CD8-positive, alpha-beta T cell (primary cell): ENCODE measurements at regions of chr10 and their contacts with region 1.

Region 1: GRCh38 chr10:128011175-128011979 is 104.5 kb downstream of the PTPRE start:
- DNase-seq: peak; percentile 78 to 94 (median 88)
- ATAC-seq: peak; percentile 100
- H3K4me3 ChIP-seq: no peak overlapping the region
- H3K4me3 Mint-ChIP-seq: peak overlapping the region; percentile 15
- H3K27ac ChIP-seq: no peak overlapping the region
- H3K27ac Mint-ChIP-seq: no peak overlapping the region
- H3K4me1 ChIP-seq: peaks cover 6% of the 10 kb centered on the region
- H3K4me1 Mint-ChIP-seq: peaks cover 8% of the 10 kb centered on the region
- H3K27me3 ChIP-seq: no peaks in the 10 kb centered on the region
- H3K27me3 Mint-ChIP-seq: peaks cover 3% of the 10 kb centered on the region
- CTCF ChIP-seq: peak; percentile 88

Region 2: DNA sequence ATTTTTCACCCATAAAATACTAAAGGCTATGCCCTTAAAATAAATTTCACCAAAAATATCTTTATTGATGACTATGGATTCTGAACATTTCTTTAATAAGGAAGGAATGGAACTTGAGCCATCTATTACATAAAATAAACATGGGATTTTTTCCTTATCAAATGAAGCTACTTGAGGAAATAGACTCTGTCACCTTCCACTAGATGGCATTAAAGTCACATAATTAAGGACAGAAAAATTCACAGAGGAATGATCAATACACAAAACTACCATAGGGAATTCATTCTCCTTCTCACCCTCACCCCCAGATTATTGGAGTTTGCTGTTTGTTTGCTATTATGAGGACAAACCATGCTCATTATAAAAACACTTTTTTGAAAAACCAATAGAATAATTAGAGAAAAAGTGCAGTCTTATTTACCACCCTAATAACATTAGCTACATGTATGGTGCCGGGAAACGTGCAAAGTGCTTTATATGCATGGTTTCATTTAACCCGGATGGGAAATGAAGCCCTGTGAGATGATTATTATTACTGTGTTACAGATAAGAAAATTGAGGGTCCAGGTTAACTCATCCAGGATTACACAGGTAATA is 295.5 kb before region 1 on chr10:
- CTCF ChIA-PET with region 1: no interaction called
- POLR2A ChIA-PET with region 1: no interaction called
- intact Hi-C with region 1: loop called in 1 of 2 experiments (anchors 5 kb)
- DNase-seq: peak in 2 of 9 experiments; percentile 13 to 24
- ATAC-seq: no peak
- H3K4me3 ChIP-seq: no peak overlapping the region
- H3K4me3 Mint-ChIP-seq: no peak overlapping the region
- H3K27ac ChIP-seq: no peak overlapping the region
- H3K27ac Mint-ChIP-seq: no peak overlapping the region
- H3K4me1 ChIP-seq: no peaks in the 10 kb centered on the region
- H3K4me1 Mint-ChIP-seq: no peaks in the 10 kb centered on the region
- H3K27me3 ChIP-seq: no peaks in the 10 kb centered on the region
- H3K27me3 Mint-ChIP-seq: peaks cover 2% of the 10 kb centered on the region
- CTCF ChIP-seq: no peak

Region 3: DNA sequence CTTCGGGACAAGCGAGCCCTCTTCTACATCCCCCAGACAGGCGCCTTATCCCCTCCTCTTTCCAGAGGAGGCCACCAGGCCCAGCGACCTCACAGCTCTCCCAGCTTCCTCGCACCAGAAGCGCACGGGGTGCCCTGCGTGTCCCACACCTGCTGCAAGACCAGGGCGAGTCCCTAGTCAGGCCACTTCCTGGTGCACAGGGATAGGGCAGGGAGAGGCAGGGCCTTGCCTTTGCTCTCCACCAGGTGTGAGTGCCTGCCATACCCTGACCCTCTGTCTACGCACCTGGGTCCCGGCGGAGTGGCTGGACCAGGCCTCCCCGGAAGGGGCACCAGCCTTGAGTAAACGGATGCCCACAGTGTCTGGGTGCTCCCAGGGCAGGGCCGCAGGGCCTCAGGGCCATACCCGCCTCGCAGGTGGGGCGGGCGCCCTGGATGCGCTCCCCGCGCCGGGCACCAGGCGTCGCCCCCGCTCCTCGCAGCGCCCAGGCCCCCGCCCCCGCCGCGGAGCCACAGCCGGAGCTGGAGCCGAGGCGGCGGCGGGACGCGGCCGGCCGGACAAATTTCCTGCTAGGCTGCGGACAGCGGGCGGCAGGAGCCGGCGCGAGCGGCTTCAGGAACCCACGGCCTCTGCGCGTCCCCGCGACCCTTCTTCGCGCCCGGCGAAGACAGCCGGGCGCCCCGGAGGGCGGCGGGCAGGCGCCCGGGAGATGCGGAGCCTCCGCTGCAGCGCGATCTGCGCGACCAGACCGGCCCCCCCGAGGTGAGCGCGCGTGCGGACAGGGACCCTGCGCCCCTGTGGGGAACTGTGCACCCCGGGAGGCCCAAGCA is 104.6 kb before region 1 on chr10 and contains the start of gene PTPRE:
- CTCF ChIA-PET with region 1: interaction called, 38 read pairs
- POLR2A ChIA-PET with region 1: no interaction called
- intact Hi-C with region 1: loop called in 1 of 2 experiments (anchors 1 kb)
- DNase-seq: peak; percentile 17 to 79 (median 49)
- ATAC-seq: peak; percentile 96
- H3K4me3 ChIP-seq: peak within 1 kb of the TSS in 1 of 2 experiments; percentile 41
- H3K4me3 Mint-ChIP-seq: peak within 1 kb of the TSS; percentile 58
- H3K27ac ChIP-seq: no peak within 1 kb of the TSS
- H3K27ac Mint-ChIP-seq: no peak within 1 kb of the TSS
- H3K4me1 ChIP-seq: no peaks in the 10 kb centered on the region
- H3K4me1 Mint-ChIP-seq: no peaks in the 10 kb centered on the region
- H3K27me3 ChIP-seq: no peaks in the 10 kb centered on the region
- H3K27me3 Mint-ChIP-seq: peaks cover 32% of the 10 kb centered on the region
- CTCF ChIP-seq: peak; percentile 54
- total RNA-seq, gene PTPRE: 72.0 to 80.4 TPM

Region 4: DNA sequence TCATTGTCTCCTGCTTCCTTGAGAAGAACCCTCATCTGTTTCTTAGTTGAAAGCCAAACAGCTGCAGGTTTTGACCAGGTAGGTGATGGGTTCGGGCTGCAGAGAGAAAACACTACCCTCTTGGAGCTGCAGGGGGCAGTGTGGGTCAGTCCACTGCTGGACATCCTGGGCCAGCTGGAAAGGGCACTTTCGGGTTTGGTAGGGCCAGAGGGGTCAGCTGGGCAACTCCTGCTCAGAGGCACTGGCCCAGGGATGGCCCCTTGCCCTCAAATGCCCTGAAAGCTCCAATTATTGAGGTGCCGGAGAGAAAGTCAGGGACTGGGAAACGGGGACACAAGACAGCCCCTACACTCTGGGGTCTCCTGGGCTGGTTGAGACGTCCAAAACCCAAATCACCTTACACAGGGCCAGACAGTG is 24.2 kb after region 1 on chr10:
- CTCF ChIA-PET with region 1: interaction called, 21 read pairs
- POLR2A ChIA-PET with region 1: no interaction called
- intact Hi-C with region 1: no loop called
- DNase-seq: peak; percentile 40 to 78 (median 70)
- ATAC-seq: peak; percentile 78
- H3K4me3 ChIP-seq: no peak overlapping the region
- H3K4me3 Mint-ChIP-seq: no peak overlapping the region
- H3K27ac ChIP-seq: no peak overlapping the region
- H3K27ac Mint-ChIP-seq: no peak overlapping the region
- H3K4me1 ChIP-seq: no peaks in the 10 kb centered on the region
- H3K4me1 Mint-ChIP-seq: no peaks in the 10 kb centered on the region
- H3K27me3 ChIP-seq: no peaks in the 10 kb centered on the region
- H3K27me3 Mint-ChIP-seq: no peaks in the 10 kb centered on the region
- CTCF ChIP-seq: peak; percentile 73

Region 5: DNA sequence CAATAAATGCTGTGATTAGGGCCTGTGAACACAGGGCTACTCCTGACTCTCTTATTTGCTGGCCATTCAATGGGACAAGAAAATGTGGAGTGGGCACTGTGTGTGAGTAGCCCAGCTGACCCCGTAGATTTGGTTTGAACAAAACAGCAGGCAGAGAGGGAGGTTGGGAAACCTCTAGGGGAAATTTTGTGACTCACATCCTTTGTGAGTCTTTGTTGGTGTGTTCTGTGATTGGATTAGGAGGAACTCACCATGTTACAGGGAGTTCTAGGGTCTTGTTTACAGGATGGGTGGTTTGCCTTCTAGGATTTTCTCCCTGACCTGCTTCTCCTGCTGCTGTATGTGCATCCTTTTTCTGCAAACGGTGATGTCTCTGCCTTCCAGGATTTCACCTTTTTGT is 243.1 kb after region 1 on chr10:
- CTCF ChIA-PET with region 1: no interaction called
- POLR2A ChIA-PET with region 1: no interaction called
- intact Hi-C with region 1: no loop called
- DNase-seq: no peak
- ATAC-seq: no peak
- H3K4me3 ChIP-seq: no peak overlapping the region
- H3K4me3 Mint-ChIP-seq: no peak overlapping the region
- H3K27ac ChIP-seq: no peak overlapping the region
- H3K27ac Mint-ChIP-seq: no peak overlapping the region
- H3K4me1 ChIP-seq: no peaks in the 10 kb centered on the region
- H3K4me1 Mint-ChIP-seq: no peaks in the 10 kb centered on the region
- H3K27me3 ChIP-seq: no peaks in the 10 kb centered on the region
- H3K27me3 Mint-ChIP-seq: peaks cover 5% of the 10 kb centered on the region
- CTCF ChIP-seq: no peak

Region 6: DNA sequence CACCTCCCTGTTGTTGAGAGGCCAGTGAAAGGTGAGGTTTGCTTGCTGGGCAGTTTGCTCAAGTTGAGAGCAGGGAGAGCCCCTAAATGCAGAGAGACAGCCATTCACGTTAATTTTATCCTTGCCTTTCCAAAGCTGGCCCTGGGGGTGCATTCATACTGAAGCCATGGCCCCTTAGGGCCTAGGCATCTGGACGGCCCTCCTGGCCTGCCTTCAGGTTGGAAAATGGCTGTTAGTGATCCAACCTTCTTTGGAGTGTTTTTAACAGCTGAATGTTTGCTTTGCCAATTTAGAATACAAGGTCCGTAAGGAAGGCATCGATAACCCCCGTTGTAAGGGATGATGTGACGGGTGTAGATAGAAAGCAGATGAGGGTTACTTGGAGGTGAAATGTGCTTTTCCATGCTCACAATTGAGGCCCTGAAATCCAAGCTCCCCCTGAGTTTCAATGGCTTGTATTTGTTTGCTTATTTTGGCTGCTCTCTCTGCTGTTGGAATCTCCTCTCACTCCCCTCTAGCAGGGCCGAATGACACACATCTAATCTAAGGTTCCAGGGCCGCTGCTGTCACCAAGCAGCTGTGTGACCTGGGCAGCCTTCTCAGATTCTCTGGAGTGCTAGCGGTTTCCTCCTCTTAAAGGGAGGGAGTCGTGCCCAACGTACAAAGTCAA is 286.5 kb after region 1 on chr10:
- CTCF ChIA-PET with region 1: no interaction called
- POLR2A ChIA-PET with region 1: no interaction called
- intact Hi-C with region 1: no loop called
- DNase-seq: no peak
- ATAC-seq: no peak
- H3K4me3 ChIP-seq: no peak overlapping the region
- H3K4me3 Mint-ChIP-seq: no peak overlapping the region
- H3K27ac ChIP-seq: no peak overlapping the region
- H3K27ac Mint-ChIP-seq: no peak overlapping the region
- H3K4me1 ChIP-seq: no peaks in the 10 kb centered on the region
- H3K4me1 Mint-ChIP-seq: no peaks in the 10 kb centered on the region
- H3K27me3 ChIP-seq: no peaks in the 10 kb centered on the region
- H3K27me3 Mint-ChIP-seq: no peaks in the 10 kb centered on the region
- CTCF ChIP-seq: no peak